Activated naive CD8-positive, alpha-beta T cell treated with anti-CD3 and anti-CD28 coated beads, Interleukin-2, amount 10 ng/mL, durations not matched to agents 7 days and 5 days (primary cell): ENCODE measurements at regions of chr22 and their contacts with region 1.

Region 1: DNA sequence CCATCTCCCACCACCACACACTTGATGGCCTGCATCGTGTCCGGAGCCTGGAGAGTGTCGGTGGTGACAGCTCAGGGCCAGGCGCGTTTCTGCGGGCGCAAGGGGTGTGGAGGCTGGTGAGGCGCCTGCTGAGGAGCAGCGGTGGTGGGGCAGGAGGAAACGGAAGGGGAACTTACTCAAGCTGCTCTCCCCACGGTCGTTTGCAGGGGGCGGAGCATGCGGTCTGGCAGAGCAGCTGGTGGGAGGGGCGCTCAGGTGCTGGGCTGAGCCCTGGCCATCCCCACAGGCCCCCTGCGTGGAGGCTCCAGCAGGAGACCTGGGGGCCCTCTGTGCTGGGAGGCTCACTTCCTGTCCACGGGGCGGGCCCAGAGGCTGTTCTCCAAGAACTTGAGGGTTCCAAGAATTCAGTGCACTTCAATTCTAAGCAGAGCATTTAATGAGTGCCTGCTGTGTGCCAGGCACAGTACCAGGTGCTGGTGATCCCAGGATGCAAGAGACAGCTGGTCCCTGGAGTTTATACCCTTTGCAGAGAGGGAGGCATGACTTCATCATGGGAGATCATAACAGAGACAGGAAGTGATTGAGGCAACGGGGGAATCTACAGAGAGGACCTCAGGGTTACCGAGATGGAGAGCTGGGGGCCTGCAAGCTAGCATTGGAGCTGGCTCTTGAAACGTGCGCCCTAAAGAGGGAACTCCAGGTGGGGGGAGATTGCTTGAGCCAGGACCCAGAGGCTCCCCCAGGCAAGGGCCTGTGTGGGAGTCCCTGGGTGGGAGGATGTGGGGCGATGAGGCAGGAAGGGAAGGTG is at the start of gene RAC2:
- DNase-seq: peak; percentile 91
- ATAC-seq: peak; percentile 64
- H3K4me3 Mint-ChIP-seq: peak within 1 kb of the TSS; percentile 100
- H3K27ac Mint-ChIP-seq: peak within 1 kb of the TSS; percentile 100
- H3K4me1 Mint-ChIP-seq: peaks cover 33% of the 10 kb centered on the region
- H3K27me3 Mint-ChIP-seq: no peaks in the 10 kb centered on the region
- total RNA-seq, gene RAC2: 963 to 1,011 TPM

Region 2: DNA sequence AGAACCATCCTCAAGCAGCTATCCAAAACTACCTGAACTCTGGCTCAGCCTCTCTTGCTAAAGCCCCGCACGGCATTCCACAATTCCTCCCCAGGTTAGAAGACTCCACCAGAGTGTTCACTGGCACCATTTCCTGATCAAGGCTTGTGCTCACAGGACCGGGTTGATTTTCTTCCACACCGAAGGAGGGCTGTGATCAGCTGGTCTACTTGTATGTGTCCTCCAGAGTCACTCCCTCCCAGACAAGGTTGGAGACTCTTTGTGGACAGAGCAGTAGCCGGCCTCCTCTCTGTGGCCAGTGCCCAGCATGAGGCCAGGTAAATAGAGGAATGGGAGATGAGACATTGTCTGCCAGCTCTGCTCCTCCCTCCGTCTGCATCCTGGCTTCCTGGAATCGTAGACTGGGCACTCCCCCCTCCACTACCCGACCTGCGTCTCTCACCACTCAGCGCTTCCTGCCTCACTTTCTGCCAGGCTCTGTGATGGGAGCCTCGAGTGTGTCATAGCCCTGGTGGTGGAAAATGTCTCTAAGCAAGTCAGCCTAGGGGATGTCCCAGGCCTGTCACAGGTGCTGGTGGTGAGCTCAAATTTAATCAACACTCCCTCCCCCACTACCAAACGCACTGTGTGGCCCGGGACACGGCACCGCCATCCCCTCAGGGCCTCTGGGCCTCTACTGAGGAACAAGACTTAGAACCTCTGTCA is 122.3 kb before region 1 on chr22:
- POLR2A ChIA-PET with region 1: interaction called, 10 read pairs
- DNase-seq: peak; percentile 82
- ATAC-seq: peak; percentile 98
- H3K4me3 Mint-ChIP-seq: peak overlapping the region; percentile 85
- H3K27ac Mint-ChIP-seq: peak overlapping the region; percentile 98
- H3K4me1 Mint-ChIP-seq: peaks cover 64% of the 10 kb centered on the region
- H3K27me3 Mint-ChIP-seq: no peaks in the 10 kb centered on the region

Region 3: GRCh38 chr22:37166675-37167066 is 77.6 kb before region 1 on chr22:
- POLR2A ChIA-PET with region 1: interaction called, 50 read pairs
- DNase-seq: peak; percentile 87
- ATAC-seq: peak; percentile 49
- H3K4me3 Mint-ChIP-seq: peak overlapping the region; percentile 80
- H3K27ac Mint-ChIP-seq: peak overlapping the region; percentile 89
- H3K4me1 Mint-ChIP-seq: peaks cover 87% of the 10 kb centered on the region
- H3K27me3 Mint-ChIP-seq: no peaks in the 10 kb centered on the region

Region 4: DNA sequence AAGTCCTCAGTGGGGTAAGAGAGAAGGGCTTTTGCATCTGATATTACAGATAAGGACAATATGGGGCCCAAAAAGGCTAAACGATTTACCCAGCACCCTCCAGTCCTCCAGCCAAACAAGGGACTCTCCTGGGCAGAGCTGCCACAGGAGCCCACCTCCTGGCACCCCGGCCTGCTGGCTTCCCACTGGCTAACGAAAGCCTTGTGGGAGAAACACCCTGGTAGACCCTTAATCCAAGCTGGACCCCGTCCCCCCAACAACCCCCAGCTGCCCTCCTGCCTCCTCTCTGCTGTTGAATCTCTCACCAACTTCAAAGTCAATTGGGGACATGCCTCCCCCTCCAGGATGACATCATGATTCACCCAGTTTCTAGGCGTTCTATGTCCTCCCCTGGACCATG is 67.1 kb before region 1 on chr22:
- POLR2A ChIA-PET with region 1: no interaction called
- DNase-seq: peak; percentile 10
- ATAC-seq: no peak
- H3K4me3 Mint-ChIP-seq: no peak overlapping the region
- H3K27ac Mint-ChIP-seq: no peak overlapping the region
- H3K4me1 Mint-ChIP-seq: peaks cover 15% of the 10 kb centered on the region
- H3K27me3 Mint-ChIP-seq: no peaks in the 10 kb centered on the region

Region 5: DNA sequence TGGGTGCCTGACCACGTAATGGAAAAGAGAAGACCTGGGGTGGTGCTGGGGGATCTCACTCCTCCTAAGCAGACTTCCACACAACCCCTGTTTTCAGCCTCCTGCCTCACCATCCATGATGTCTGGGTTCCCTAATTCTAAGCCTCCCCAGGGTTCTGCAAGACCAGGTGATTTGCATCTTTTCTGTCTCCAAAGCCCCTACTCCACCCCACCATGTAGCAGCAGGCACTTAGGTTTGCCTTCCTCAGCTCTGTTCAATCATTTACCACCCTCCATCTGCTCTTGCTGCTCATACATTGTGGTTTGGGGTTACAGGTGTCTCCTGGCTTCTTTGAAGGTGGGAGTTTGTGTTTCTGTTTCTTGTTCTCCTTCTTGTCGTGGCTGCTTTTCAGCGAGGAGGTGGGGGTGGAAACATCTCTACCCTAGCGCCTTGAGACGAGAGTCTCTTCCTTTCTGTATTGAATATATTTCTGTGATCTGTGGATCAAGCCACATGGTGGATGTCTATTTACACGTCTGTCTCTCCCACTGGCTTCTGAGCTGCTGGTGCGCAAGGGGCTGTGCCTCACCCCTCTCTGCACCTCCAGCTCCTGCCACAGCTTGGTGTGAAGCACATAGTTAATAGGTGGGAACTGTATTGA is 25.4 kb before region 1 on chr22:
- POLR2A ChIA-PET with region 1: interaction called, 327 read pairs
- DNase-seq: peak; percentile 64
- ATAC-seq: peak; percentile 70
- H3K4me3 Mint-ChIP-seq: peak overlapping the region; percentile 92
- H3K27ac Mint-ChIP-seq: peak overlapping the region; percentile 93
- H3K4me1 Mint-ChIP-seq: peaks cover 68% of the 10 kb centered on the region
- H3K27me3 Mint-ChIP-seq: no peaks in the 10 kb centered on the region

Region 6: GRCh38 chr22:37260901-37261336 is 16.6 kb after region 1 on chr22:
- POLR2A ChIA-PET with region 1: interaction called, 46 read pairs
- DNase-seq: peak; percentile 68
- ATAC-seq: peak; percentile 52
- H3K4me3 Mint-ChIP-seq: peak overlapping the region; percentile 41
- H3K27ac Mint-ChIP-seq: peak overlapping the region; percentile 39
- H3K4me1 Mint-ChIP-seq: peaks cover 21% of the 10 kb centered on the region
- H3K27me3 Mint-ChIP-seq: peaks cover 7% of the 10 kb centered on the region

Region 7: DNA sequence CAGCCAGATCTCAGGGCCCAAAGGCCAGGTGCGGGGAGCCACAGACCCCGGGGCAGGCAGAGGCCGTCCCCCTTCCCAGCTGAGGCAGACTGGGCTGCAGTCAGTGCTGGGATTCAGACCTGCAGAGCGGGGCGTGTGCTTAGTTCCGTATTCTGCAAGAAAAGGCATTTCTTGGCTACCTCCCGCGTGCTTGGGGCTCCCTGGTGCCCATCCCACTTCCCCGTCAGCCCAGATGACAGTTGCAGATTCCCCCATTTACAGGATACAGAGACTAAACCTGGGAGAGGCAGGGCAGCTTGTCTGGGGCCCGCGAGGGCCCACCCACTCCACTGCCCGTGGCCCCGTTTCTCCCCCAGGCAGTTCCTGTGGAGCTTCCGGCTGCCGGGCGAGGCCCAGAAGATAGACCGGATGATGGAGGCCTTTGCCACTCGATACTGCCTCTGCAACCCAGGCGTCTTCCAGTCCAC is 56.3 kb after region 1 on chr22:
- POLR2A ChIA-PET with region 1: interaction called, 11 read pairs
- DNase-seq: peak; percentile 73
- ATAC-seq: peak; percentile 59
- H3K4me3 Mint-ChIP-seq: peak overlapping the region; percentile 83
- H3K27ac Mint-ChIP-seq: peak overlapping the region; percentile 99
- H3K4me1 Mint-ChIP-seq: peaks cover 72% of the 10 kb centered on the region
- H3K27me3 Mint-ChIP-seq: no peaks in the 10 kb centered on the region

Region 8: DNA sequence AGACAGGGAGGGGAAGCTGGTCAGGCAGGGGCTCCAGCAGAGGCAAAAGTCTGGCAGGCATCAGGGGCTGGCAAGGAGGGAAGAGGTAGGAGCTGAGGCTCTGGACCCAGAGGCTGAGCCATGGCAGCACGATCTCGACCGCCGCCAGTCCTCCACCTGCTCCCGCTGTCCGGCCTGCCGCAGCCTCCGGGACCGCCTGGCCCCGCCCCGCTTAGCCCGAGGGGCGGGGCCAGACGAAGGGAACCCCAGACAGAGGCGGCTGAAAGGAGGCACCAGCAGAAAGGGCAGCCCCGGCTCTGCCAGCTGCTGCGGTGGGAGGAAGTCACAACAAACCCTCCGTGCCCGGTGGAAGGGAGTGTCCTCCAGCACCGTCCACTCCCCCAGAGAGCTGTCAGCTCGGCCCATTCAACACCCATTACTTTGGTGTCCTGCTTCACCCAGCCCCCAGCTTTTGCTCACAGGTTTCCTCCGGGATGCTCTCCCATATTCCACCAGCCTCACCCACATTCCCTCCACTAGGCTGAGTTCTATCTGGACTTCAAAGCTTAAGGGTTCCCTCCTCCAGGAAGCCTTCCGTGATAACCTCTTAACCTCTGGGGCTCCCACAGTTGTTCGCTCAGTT is 242.0 kb after region 1 on chr22 and contains the start of gene MFNG:
- POLR2A ChIA-PET with region 1: interaction called, 29 read pairs
- DNase-seq: peak; percentile 80
- ATAC-seq: peak; percentile 57
- H3K4me3 Mint-ChIP-seq: peak within 1 kb of the TSS; percentile 90
- H3K27ac Mint-ChIP-seq: peak within 1 kb of the TSS; percentile 89
- H3K4me1 Mint-ChIP-seq: peaks cover 48% of the 10 kb centered on the region
- H3K27me3 Mint-ChIP-seq: no peaks in the 10 kb centered on the region
- total RNA-seq, gene MFNG: 207 to 211 TPM